ENCODE measurements at regions of chr12 and their contacts with region 1.

Region 1: DNA sequence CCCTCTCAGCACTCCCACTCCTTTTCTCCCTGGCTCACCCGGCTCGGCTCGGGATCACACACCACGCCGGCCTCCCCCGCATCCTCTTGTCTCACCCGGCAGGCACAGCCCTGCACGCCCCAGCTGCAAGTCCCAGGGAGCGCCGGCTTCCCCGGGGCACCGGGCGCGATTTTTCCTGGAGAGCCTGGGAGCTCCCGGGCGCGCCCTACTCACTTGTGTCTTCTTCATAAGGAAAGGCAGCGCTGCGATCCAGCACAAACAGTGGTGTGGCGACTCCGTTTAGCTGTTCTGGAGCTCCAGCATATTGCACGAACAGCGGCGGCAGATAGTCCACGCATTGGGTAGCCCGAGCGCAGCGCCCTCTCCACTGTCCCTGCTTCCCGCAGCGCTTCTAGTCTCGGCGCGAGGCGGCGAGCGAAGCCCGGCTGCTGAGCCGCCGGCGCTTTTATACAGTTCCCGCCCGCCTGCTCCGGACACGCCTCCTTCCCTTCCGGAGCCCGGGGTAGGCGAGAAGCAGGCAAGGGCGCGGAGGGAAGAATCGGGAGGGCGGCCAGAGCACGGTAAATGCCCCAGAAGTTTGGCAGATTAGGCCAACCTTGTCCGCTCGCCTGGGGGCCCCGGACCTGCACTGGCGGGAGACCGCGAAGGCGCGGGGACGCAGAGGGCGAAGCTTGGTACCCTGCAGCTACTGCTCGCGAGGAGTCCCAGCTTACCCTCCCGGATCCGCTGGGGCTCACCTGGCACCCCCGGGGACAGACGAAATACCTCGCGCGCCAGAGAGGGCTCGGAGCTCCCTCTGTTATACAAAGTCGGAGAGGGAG is at the start of gene KITLG:
- DNase-seq: peak; percentile 89
- H3K4me3 ChIP-seq: peak within 1 kb of the TSS; percentile 65
- H3K27ac ChIP-seq: no peak within 1 kb of the TSS
- H3K4me1 ChIP-seq: peaks cover 12% of the 10 kb centered on the region
- H3K27me3 ChIP-seq: no peaks in the 10 kb centered on the region
- CTCF ChIP-seq: peak; percentile 46
- total RNA-seq, gene KITLG: 4.6 and 5.7 TPM in 2 replicates

Region 2: GRCh38 chr12:88153959-88154358 is 426.3 kb before region 1 on chr12:
- CTCF ChIA-PET with region 1: no interaction called
- POLR2A ChIA-PET with region 1: no interaction called
- intact Hi-C with region 1: loop called (anchors 5 kb)
- DNase-seq: peak; percentile 41
- H3K4me3 ChIP-seq: no peak overlapping the region
- H3K27ac ChIP-seq: no peak overlapping the region
- H3K4me1 ChIP-seq: no peaks in the 10 kb centered on the region
- H3K27me3 ChIP-seq: no peaks in the 10 kb centered on the region
- CTCF ChIP-seq: peak; percentile 56; the same call in 1 of the 2 replicates

Region 3: GRCh38 chr12:88595697-88596096 is 15.4 kb after region 1 on chr12:
- CTCF ChIA-PET with region 1: interaction called, 3 read pairs
- POLR2A ChIA-PET with region 1: interaction called, 19 read pairs
- intact Hi-C with region 1: no loop called
- DNase-seq: no peak
- H3K4me3 ChIP-seq: no peak overlapping the region
- H3K27ac ChIP-seq: no peak overlapping the region
- H3K4me1 ChIP-seq: no peaks in the 10 kb centered on the region
- H3K27me3 ChIP-seq: no peaks in the 10 kb centered on the region
- CTCF ChIP-seq: no peak

Region 4: DNA sequence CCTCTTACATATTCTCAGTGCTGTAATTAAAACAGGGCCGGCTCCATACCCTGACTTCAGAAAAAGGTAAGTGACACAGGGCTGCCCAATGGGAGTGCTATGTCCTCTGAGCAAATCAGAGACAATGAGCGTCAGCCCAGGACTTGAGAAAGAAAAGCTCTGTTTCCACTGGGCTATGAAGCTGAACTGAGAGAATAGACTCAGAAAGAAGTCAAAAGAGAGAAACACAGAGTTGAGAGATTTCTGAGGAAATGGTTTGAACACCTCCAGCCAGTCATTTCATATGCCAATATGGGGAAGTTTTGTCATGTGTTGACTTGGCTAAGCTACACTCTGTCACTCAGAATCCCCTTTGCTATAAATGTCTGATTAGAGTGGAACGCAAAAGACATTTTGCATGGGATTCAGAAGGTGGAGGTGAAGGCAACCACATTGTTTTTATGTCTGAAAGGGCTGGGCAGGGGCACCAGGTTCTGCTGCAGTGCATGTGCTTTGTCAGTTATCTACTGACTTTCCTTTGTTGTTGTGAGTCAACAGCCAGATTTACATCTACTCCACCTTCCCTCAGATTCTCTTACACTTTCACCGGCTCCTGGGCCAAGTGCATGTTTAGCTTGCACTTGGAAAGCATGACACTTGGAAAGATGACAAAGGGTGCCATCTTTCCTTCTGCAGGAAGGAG is 458.7 kb after region 1 on chr12:
- CTCF ChIA-PET with region 1: no interaction called
- POLR2A ChIA-PET with region 1: no interaction called
- intact Hi-C with region 1: no loop called
- DNase-seq: no peak
- H3K4me3 ChIP-seq: no peak overlapping the region
- H3K27ac ChIP-seq: peak overlapping the region; percentile 87
- H3K4me1 ChIP-seq: peaks cover 45% of the 10 kb centered on the region
- H3K27me3 ChIP-seq: no peaks in the 10 kb centered on the region
- CTCF ChIP-seq: no peak

Measured in A673 (cell line).